Ovary (tissue), 10 donors: ENCODE measurements at regions of chr12 and their contacts with region 1.

Region 1: GRCh38 chr12:32069071-32069470 is 37.6 kb upstream of the BICD1 start:
- DNase-seq: no peak
- H3K4me3 ChIP-seq: no peak overlapping the region
- H3K27ac ChIP-seq: no peak overlapping the region
- H3K4me1 ChIP-seq: peaks cover 1% of the 10 kb centered on the region
- H3K27me3 ChIP-seq: no peaks in the 10 kb centered on the region
- CTCF ChIP-seq: no peak
- EP300 ChIP-seq: no peak
- POLR2A ChIP-seq: no peak

Region 2: DNA sequence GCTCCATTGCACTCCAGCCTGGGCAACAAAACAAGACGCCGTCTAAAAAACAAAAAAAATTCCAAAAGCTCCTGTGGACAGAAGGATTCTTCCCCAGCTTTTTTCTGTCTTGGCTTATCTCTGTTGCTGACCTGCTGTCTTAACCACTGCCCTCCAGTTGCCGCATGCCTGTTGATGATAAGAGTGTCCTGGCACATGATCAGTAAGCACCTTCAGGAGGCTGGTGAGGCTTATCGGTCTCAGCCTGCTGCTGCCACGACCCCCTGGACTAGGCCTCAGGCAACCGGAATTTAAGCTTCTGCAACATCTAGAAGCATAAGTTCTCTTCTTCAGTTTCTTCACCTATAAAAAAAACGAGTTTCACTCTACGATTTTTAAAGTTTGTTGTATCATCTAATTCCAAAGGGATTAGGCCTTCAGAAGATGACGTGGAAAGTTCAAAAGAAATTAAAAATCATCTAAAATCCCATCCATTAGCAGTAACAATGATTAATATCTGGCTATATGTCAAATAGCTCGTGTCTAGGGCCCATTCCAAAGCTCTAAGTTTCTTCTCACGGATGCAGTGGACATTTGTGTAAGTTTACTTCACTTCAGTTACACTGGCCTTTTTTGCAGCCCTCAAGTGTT is 63.5 kb before region 1 on chr12:
- intact Hi-C with region 1: no loop called
- DNase-seq: peak in 1 of 5 donors; percentile 25
- H3K4me3 ChIP-seq: no peak overlapping the region
- H3K27ac ChIP-seq: peak overlapping the region in 1 of 2 donors; percentile 25
- H3K4me1 ChIP-seq: peaks cover 16% of the 10 kb centered on the region
- H3K27me3 ChIP-seq: no peaks in the 10 kb centered on the region
- CTCF ChIP-seq: no peak
- EP300 ChIP-seq: no peak
- POLR2A ChIP-seq: no peak

Region 3: GRCh38 chr12:32102234-32102633 is 33.2 kb after region 1 on chr12:
- intact Hi-C with region 1: loop called in 1 of 4 experiments (anchors 5 kb)
- DNase-seq: no peak
- H3K4me3 ChIP-seq: no peak overlapping the region
- H3K27ac ChIP-seq: no peak overlapping the region
- H3K4me1 ChIP-seq: no peaks in the 10 kb centered on the region
- H3K27me3 ChIP-seq: no peaks in the 10 kb centered on the region
- CTCF ChIP-seq: no peak
- EP300 ChIP-seq: no peak
- POLR2A ChIP-seq: no peak

Region 4: DNA sequence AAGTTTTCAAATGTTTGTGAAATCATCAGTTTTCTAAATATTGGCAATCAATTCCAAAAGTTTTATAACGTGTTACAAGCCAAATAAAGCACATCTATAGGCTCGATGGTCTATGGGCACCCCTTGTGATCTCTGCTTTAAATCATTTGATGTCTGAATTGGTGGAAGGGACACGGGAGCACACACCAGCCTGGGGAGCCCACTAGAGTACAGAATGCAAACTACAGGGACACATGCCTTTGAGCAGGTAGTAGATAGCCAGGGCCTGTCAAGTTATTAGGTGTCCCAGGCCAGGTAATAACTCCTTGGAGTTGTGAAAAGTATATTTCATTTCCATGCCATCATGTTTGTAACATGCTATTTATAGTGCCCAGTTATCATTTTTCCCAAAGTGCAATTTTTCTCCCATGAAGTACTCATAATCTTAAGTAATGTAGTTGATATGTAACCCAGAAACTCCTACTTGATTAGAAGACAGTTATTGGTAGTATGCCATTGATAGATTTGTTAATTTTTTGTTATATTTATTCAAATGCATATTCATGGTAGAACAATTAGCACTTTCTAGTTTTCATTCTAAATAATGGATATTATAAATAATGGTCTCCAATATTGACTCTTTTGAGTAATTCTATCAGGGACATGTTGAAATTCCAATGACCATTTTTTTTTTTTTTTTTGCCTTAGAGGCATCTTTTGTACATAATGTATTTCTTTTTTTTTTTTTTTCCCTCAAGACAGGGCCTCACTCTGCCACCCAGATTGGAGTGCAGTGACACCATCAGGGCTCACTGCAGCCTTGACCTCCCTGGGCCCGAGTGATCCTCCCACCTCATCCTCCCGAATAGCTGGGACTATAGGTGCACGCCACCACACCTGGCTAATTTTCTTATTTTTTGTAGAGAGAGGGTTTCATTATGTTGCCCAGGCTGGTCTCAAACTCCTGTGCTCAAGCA is 233.4 kb after region 1 on chr12:
- intact Hi-C with region 1: loop called in 1 of 4 experiments (anchors 10 kb)
- DNase-seq: no peak
- H3K4me3 ChIP-seq: no peak overlapping the region
- H3K27ac ChIP-seq: no peak overlapping the region
- H3K4me1 ChIP-seq: peaks cover 3% of the 10 kb centered on the region
- H3K27me3 ChIP-seq: peaks cover 2% of the 10 kb centered on the region
- CTCF ChIP-seq: peak in 1 of 3 donors; percentile 31
- EP300 ChIP-seq: no peak
- POLR2A ChIP-seq: no peak

Region 5: GRCh38 chr12:32312049-32312670 is 243.1 kb after region 1 on chr12:
- intact Hi-C with region 1: loop called in 2 of 4 experiments (anchors 10 kb)
- DNase-seq: no peak
- H3K4me3 ChIP-seq: no peak overlapping the region
- H3K27ac ChIP-seq: no peak overlapping the region
- H3K4me1 ChIP-seq: peaks cover 5% of the 10 kb centered on the region
- H3K27me3 ChIP-seq: no peaks in the 10 kb centered on the region
- CTCF ChIP-seq: peak in 2 of 3 donors; percentile 51
- EP300 ChIP-seq: no peak
- POLR2A ChIP-seq: no peak